HEK293 (cell line): ENCODE measurements at regions of chr17 and their contacts with region 1.

Region 1: GRCh38 chr17:4986951-4987766 is at the start of gene CAMTA2:
- H3K4me3 ChIP-seq: peak within 1 kb of the TSS; percentile 78
- H3K27ac ChIP-seq: peak within 1 kb of the TSS; percentile 92
- H3K4me1 ChIP-seq: peaks cover 11% of the 10 kb centered on the region
- CTCF ChIP-seq: peak; percentile 99

Region 2: GRCh38 chr17:4881761-4882555 is 105.2 kb before region 1 on chr17:
- CTCF ChIA-PET with region 1: no interaction called
- POLR2A ChIA-PET with region 1: no interaction called
- H3K4me3 ChIP-seq: no peak overlapping the region
- H3K27ac ChIP-seq: no peak overlapping the region
- H3K4me1 ChIP-seq: no peaks in the 10 kb centered on the region
- CTCF ChIP-seq: peak; percentile 54; the same call in 1 of the 2 replicates

Region 3: DNA sequence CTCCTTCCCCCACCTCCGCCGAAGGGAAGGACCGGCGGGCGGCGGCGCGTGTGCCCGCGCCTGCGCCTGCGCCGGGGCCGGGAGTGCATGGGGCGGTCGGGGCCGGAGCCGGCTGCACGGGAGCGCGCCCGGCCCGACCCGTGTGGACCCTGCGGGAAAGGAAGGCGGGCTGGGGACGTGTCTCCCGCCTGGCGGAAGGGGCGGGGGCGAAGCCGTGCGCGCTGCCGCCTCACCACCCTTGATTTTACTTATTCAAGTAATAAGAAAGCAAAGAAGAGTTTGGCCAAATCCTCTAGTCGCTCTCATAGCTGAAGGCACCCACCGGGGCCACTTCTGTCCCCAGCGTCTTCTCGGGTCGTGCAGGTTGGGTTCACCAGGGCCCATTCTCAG is 38.2 kb before region 1 on chr17:
- CTCF ChIA-PET with region 1: interaction called, 4 read pairs
- POLR2A ChIA-PET with region 1: interaction called, 11 read pairs
- H3K4me3 ChIP-seq: peak overlapping the region; percentile 97
- H3K27ac ChIP-seq: peak overlapping the region; percentile 99
- H3K4me1 ChIP-seq: peaks cover 21% of the 10 kb centered on the region
- CTCF ChIP-seq: no peak